Ovary (tissue), 10 donors: ENCODE measurements at regions of chr12 and their contacts with region 1.

Region 1: GRCh38 chr12:52156736-52157565 is 34.9 kb downstream of the KRT80 start:
- DNase-seq: peak; percentile 64 to 86 (median 81)
- H3K4me3 ChIP-seq: no peak overlapping the region
- H3K27ac ChIP-seq: no peak overlapping the region
- H3K4me1 ChIP-seq: peaks cover 3% of the 10 kb centered on the region
- H3K27me3 ChIP-seq: no peaks in the 10 kb centered on the region
- CTCF ChIP-seq: peak; percentile 71 to 83 (median 77)
- EP300 ChIP-seq: no peak
- POLR2A ChIP-seq: peak; percentile 9

Region 2: GRCh38 chr12:50222275-50222795 is 1934.6 kb before region 1 on chr12:
- intact Hi-C with region 1: no loop called
- DNase-seq: peak; percentile 57 to 80 (median 69)
- H3K4me3 ChIP-seq: peak overlapping the region; percentile 43
- H3K27ac ChIP-seq: peak overlapping the region; percentile 31 to 52
- H3K4me1 ChIP-seq: peaks cover 3% of the 10 kb centered on the region
- H3K27me3 ChIP-seq: no peaks in the 10 kb centered on the region
- CTCF ChIP-seq: peak in 2 of 3 donors; percentile 20 to 55
- EP300 ChIP-seq: no peak
- POLR2A ChIP-seq: peak; percentile 24

Region 3: GRCh38 chr12:52213512-52214420 is 56.8 kb after region 1 on chr12:
- intact Hi-C with region 1: loop called in 3 of 4 experiments (anchors 2 to 5 kb)
- DNase-seq: peak; percentile 41 to 78 (median 64)
- H3K4me3 ChIP-seq: no peak overlapping the region
- H3K27ac ChIP-seq: no peak overlapping the region
- H3K4me1 ChIP-seq: peaks cover 2% of the 10 kb centered on the region
- H3K27me3 ChIP-seq: no peaks in the 10 kb centered on the region
- CTCF ChIP-seq: peak; percentile 34 to 76 (median 55)
- EP300 ChIP-seq: no peak
- POLR2A ChIP-seq: no peak

Region 4: DNA sequence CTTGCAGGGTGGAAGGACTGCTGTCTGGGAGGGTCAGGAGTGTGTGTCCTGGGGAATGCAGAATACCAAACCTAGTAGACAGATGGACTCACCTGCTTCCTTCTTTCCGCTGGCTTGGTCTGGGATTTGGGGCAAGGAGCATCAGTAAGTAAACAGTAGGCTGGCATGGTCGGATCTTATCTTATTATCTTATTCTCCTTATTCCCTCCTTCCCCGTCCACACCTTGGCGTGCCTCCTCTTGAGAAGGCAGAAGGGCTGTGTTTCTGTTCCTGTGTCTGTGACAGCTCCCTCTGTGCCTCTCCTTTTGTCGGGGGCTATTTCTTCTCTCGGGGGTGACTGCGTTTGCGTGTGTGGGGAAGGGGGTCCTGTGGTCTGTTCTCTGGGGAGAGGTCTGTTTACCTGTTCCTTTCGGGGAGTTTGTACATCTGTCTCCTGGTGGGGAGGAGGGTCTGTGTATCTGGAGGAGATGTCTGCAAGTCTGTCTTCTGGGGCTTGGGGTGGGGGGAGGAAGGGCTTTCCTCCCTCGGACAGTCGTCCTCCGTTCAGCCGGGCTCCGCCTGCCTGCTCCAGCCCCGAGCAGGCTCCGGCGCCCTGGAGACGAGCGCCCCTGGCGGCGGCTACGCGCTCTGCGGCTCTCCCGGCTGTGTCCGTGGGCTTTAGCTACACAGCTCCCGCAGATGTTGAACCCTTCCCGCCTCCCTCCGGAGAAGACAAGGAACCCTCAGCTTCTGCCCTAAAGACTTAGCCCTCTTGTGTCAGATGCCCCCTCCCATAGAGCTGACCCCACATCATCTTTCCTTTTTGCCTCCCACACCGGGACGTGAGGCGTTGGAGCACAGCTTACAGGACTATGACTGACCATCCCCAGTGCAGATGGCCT is 121.8 kb after region 1 on chr12:
- intact Hi-C with region 1: loop called in 1 of 4 experiments (anchors 5 kb)
- DNase-seq: peak; percentile 51 to 84 (median 66)
- H3K4me3 ChIP-seq: no peak overlapping the region
- H3K27ac ChIP-seq: no peak overlapping the region
- H3K4me1 ChIP-seq: no peaks in the 10 kb centered on the region
- H3K27me3 ChIP-seq: no peaks in the 10 kb centered on the region
- CTCF ChIP-seq: peak; percentile 77 to 83 (median 83)
- EP300 ChIP-seq: no peak
- POLR2A ChIP-seq: no peak

Region 5: DNA sequence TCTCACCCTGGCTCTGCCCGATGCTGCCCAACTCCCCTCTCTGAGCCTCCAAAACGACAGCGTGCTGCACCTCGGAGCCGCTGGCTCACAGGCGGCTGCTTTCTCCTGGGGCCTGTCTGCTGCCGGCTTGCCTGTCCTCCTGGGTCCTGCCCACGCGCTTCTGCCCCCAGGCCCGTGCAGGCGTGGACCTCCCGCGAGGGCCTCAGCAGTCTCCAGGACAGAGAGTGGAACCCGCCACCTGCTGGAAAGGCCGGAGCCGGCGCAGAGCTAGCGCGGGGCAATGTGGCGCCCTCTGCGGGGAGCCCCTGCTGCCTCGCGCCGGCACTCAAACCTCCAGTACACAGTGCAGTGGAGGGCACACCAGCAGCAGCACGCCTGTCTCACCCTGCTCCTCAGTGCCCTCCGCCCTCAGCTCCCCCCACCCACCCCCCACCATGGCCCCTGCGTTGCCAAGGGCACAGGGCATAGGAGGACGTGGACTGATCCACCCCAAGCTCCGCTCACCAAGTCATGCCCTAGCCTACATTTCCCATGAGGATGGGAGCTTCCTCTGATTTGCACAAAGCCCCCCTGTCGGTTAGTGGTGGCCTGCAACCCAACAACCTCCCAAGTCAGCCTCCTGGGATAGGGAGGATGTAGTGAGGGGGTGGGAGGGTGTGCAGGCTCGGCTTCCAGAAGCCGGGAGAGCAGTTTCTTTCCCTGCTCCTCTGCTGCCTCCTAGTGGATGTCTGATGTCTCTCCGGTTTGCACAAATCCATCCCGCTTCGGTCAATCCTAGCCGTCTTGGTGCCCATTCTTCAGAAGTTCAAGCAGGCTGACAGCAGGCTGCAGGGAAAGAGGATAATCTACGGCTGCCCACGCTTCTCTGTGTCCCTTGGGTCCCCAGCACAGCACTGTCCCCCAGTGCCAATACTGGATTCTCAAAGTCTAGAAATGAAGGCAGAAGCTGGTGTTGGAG is 722.7 kb after region 1 on chr12:
- intact Hi-C with region 1: loop called (anchors 5 kb)
- DNase-seq: peak; percentile 68 to 80 (median 77)
- H3K4me3 ChIP-seq: no peak overlapping the region
- H3K27ac ChIP-seq: no peak overlapping the region
- H3K4me1 ChIP-seq: peaks cover 4% of the 10 kb centered on the region
- H3K27me3 ChIP-seq: no peaks in the 10 kb centered on the region
- CTCF ChIP-seq: peak; percentile 71 to 76 (median 74)
- EP300 ChIP-seq: no peak
- POLR2A ChIP-seq: no peak

Region 6: GRCh38 chr12:52980693-52981423 is 823.9 kb after region 1 on chr12:
- intact Hi-C with region 1: loop called in 3 of 4 experiments (anchors 5 to 10 kb)
- DNase-seq: peak; percentile 71 to 85 (median 79)
- H3K4me3 ChIP-seq: no peak overlapping the region
- H3K27ac ChIP-seq: no peak overlapping the region
- H3K4me1 ChIP-seq: peaks cover 3% of the 10 kb centered on the region
- H3K27me3 ChIP-seq: no peaks in the 10 kb centered on the region
- CTCF ChIP-seq: peak; percentile 83 to 94 (median 94)
- EP300 ChIP-seq: no peak
- POLR2A ChIP-seq: peak; percentile 24